Esophagus muscularis mucosa (tissue), 4 donors: ENCODE measurements at regions of chr10 and their contacts with region 1.

Region 1: GRCh38 chr10:21078410-21079329 is 181.6 kb upstream of the NEBL start:
- DNase-seq: no peak
- H3K4me3 ChIP-seq: no peak overlapping the region
- H3K27ac ChIP-seq: no peak overlapping the region
- H3K4me1 ChIP-seq: no peaks in the 10 kb centered on the region
- H3K27me3 ChIP-seq: no peaks in the 10 kb centered on the region
- CTCF ChIP-seq: peak; percentile 68 to 80 (median 70)
- EP300 ChIP-seq: no peak
- POLR2A ChIP-seq: no peak

Region 2: GRCh38 chr10:21265621-21266020 is 187.0 kb after region 1 on chr10:
- intact Hi-C with region 1: loop called (anchors 5 kb)
- DNase-seq: no peak
- H3K4me3 ChIP-seq: no peak overlapping the region
- H3K27ac ChIP-seq: no peak overlapping the region
- H3K4me1 ChIP-seq: no peaks in the 10 kb centered on the region
- H3K27me3 ChIP-seq: no peaks in the 10 kb centered on the region
- CTCF ChIP-seq: no peak
- EP300 ChIP-seq: no peak
- POLR2A ChIP-seq: no peak

Region 3: DNA sequence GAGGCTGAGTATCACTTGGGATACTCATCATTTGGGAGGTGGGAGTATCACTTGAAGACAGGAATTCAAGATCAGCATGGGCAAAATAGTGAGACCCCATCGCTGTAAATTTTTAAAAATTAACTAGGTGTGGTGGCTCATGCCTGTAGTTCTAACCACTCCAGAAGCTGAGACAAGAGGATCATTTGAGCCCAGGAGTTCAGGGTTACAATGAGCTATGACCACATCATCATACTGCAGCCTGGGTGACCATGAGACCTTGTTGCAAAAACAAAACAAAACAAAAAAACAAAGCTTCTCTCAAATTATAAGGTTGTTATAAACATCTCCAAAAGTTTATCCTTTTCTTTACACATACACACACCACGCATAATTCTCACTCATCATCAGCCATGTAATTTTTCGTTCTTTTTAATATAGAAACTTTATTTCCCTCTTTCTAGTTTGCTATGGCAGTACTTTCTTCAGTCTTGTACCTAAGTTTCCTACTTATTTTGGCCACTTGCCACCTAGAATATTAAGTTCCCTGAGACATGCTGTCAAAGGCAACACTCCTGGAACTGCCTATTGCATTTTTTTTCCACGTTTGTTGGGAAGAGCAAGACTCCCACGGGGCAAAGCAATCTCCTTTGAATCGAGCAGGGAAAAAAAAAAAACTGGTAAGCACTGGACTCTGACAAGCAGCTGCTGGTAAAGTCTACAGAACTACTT is 409.7 kb after region 1 on chr10:
- intact Hi-C with region 1: loop called (anchors 10 kb)
- DNase-seq: no peak
- H3K4me3 ChIP-seq: no peak overlapping the region
- H3K27ac ChIP-seq: no peak overlapping the region
- H3K4me1 ChIP-seq: no peaks in the 10 kb centered on the region
- H3K27me3 ChIP-seq: no peaks in the 10 kb centered on the region
- CTCF ChIP-seq: no peak
- EP300 ChIP-seq: no peak
- POLR2A ChIP-seq: no peak

Region 4: GRCh38 chr10:21732067-21732772 is 653.5 kb after region 1 on chr10:
- intact Hi-C with region 1: loop called (anchors 5 kb)
- DNase-seq: no peak
- H3K4me3 ChIP-seq: no peak overlapping the region
- H3K27ac ChIP-seq: no peak overlapping the region
- H3K4me1 ChIP-seq: peaks cover 0 to 7% (median 4%) of the 10 kb centered on the region in 4 donors
- H3K27me3 ChIP-seq: no peaks in the 10 kb centered on the region
- CTCF ChIP-seq: peak; percentile 82 to 92 (median 87)
- EP300 ChIP-seq: no peak
- POLR2A ChIP-seq: no peak